ENCODE measurements at regions of chr11 and their contacts with region 1.

Region 1: DNA sequence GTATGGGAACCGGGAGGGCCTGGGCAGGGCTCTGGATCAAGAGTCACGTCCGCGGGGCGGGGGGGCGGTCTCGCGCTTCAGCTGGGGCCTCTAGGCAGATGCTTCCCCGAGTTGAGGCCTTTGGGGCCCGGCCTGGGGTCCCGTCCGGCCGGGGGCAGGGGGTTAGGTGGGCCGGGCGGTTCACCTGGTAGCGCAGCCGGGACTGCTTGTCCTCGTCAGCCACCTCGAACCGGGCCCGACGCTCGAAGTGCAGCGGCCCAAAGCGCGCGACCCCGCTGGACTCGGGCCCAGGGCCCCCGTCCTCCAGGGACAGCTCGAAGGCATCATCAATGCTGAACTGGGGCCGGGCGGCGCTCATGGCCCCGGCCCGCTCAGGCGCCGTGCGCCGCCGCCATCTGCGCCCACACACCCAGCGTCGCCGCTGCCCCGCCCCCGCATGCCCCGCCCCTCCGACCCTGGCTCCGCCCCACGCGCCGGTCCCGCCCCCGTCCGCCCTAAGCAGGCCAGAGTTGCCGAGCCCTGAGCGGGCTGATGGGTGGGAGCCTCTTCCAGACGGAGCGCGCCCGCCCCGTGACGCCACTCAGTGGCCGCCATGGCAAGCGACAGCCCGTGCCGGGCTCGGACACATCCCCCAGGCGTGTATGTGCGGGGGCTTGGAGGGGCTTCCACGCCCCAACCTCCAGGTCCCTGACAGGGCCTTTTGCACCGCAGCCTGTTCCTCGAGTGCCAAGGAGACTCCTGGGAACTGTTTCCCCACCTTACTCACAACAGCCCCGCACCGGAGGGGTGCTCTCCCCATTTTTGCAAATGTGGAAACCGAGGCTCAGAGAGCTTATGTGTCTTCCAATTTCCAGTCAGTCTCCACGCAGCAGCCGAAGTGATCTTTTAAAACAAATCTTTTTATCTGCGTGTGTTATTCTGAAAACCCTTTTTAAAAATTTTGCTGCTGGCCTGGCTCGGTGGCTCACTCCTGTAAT is at the start of gene TMEM134:
- DNase-seq: peak; percentile 94 to 97 (median 97)
- ATAC-seq: peak; percentile 92 to 94
- H3K4me3 ChIP-seq: peak within 1 kb of the TSS; percentile 75
- H3K27ac ChIP-seq: peak within 1 kb of the TSS; percentile 79
- H3K4me1 ChIP-seq: peaks cover 3% of the 10 kb centered on the region
- H3K27me3 ChIP-seq: no peaks in the 10 kb centered on the region
- total RNA-seq, gene TMEM134: 61.7 to 78.2 (median 65.4) TPM

Region 2: DNA sequence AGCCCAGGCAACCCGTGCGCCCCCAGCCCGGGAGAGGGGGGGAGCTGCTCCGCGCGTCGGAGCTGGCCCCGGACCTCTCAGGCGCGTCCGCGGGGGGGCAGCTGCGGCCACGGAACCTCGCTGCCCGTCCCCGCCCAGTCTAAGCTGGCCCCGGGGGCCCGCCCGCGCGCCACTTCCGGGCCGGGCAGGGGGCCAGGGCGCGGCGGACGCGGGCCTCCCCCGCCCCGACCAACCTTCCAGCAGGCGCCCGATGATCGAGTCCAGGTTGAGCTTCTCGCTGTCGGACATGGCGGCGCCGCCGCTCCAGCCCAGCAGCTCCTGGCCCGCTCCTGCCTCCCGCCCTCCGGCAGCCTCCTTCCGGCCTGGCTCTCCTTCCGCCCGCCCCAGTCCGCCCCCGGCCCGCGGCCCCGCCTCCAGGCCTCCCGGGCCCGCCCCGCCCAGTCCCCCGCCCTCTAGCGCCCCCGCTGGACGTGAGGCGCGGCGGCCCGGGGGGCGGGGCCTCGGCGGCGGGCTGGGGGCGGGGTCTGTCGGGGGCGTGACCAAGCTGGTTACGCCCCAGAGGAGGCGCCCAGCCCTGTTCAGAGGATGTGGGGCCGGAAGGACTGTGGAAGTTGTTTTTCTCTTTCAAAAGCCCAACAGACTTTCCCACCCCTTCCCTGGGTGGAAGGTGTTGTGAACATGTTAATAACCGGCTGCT is 67.5 kb before region 1 on chr11 and contains the start of gene PPP1CA:
- intact Hi-C with region 1: loop called in 1 of 4 experiments (anchors 5 kb)
- DNase-seq: peak; percentile 92 to 97 (median 96)
- ATAC-seq: peak; percentile 80 to 87
- H3K4me3 ChIP-seq: peak within 1 kb of the TSS; percentile 80
- H3K27ac ChIP-seq: peak within 1 kb of the TSS; percentile 97
- H3K4me1 ChIP-seq: peaks cover 6% of the 10 kb centered on the region
- H3K27me3 ChIP-seq: no peaks in the 10 kb centered on the region
- total RNA-seq, gene PPP1CA: 73.1 to 93.4 (median 79.1) TPM

Region 3: GRCh38 chr11:67416416-67417335 is 52.4 kb before region 1 on chr11:
- intact Hi-C with region 1: loop called in 1 of 4 experiments (anchors 10 kb)
- DNase-seq: peak; percentile 60 to 84 (median 80)
- ATAC-seq: no peak
- H3K4me3 ChIP-seq: no peak overlapping the region
- H3K27ac ChIP-seq: peak overlapping the region; percentile 18
- H3K4me1 ChIP-seq: peaks cover 10% of the 10 kb centered on the region
- H3K27me3 ChIP-seq: no peaks in the 10 kb centered on the region

Region 4: GRCh38 chr11:67613960-67614715 is 145.0 kb after region 1 on chr11:
- intact Hi-C with region 1: no loop called
- DNase-seq: peak; percentile 62 to 88 (median 87)
- ATAC-seq: peak; percentile 10 to 46
- H3K4me3 ChIP-seq: no peak overlapping the region
- H3K27ac ChIP-seq: peak overlapping the region; percentile 22
- H3K4me1 ChIP-seq: no peaks in the 10 kb centered on the region
- H3K27me3 ChIP-seq: no peaks in the 10 kb centered on the region